Sigmoid colon (tissue), 7 donors: ENCODE measurements at regions of chr3 and their contacts with region 1.

Region 1: DNA sequence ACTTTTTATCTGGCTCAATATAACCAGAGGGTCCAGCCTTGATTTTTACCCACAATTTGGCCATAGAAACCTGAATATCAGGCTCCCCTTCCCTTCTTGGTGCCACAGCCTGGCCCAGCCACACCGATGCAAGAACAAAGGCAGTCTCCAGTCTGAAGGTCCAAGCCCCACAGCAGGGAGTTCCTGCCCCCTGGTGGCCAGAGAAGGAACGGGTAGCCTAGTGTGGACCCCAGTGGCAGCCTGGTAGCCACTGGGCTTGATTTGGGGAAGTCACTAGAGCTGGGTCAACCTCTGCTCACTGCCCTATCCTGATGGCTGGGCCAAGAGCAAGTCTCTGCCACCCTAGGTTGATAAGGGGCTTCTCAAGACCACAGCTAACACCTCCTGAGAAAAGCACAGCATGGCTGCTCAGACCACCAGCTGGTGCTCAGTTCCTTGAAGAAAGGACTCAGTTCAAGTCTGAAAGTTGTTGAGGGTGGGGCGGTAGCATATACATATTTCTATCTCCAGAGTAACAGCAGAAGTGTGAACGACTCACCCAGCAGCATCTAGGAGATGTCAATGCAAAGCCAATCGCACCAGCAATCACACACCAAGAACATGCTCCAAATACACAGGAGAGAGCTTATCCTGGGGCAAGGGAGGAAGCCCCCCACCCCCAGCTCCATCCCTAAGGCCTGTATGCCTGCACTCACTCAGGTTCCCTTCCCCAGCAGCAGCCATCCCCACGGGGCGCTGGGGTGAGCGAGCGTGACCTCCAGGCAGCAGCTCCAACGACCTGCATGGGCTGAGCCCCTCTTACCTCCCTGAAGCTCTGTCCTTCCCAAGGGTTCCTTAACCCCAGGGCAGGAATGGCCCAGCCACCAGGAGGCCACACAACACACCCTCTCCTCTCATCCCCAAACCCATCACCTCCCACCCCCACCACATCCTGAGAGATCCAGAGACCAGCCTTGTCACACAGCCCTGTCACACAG is 7.6 kb downstream of the PFKFB4 start:
- DNase-seq: peak; percentile 91
- H3K4me3 ChIP-seq: no peak overlapping the region
- H3K27ac ChIP-seq: no peak overlapping the region
- H3K4me1 ChIP-seq: peaks cover 0 to 5% (median 0%) of the 10 kb centered on the region in 4 donors
- H3K27me3 ChIP-seq: no peaks in the 10 kb centered on the region
- CTCF ChIP-seq: peak; percentile 88 to 96 (median 94)
- EP300 ChIP-seq: no peak
- POLR2A ChIP-seq: no peak

Region 2: GRCh38 chr3:48285132-48285531 is 263.9 kb before region 1 on chr3:
- intact Hi-C with region 1: no loop called
- DNase-seq: no peak
- H3K4me3 ChIP-seq: no peak overlapping the region
- H3K27ac ChIP-seq: no peak overlapping the region
- H3K4me1 ChIP-seq: no peaks in the 10 kb centered on the region
- H3K27me3 ChIP-seq: no peaks in the 10 kb centered on the region
- CTCF ChIP-seq: no peak
- EP300 ChIP-seq: no peak
- POLR2A ChIP-seq: no peak

Region 3: DNA sequence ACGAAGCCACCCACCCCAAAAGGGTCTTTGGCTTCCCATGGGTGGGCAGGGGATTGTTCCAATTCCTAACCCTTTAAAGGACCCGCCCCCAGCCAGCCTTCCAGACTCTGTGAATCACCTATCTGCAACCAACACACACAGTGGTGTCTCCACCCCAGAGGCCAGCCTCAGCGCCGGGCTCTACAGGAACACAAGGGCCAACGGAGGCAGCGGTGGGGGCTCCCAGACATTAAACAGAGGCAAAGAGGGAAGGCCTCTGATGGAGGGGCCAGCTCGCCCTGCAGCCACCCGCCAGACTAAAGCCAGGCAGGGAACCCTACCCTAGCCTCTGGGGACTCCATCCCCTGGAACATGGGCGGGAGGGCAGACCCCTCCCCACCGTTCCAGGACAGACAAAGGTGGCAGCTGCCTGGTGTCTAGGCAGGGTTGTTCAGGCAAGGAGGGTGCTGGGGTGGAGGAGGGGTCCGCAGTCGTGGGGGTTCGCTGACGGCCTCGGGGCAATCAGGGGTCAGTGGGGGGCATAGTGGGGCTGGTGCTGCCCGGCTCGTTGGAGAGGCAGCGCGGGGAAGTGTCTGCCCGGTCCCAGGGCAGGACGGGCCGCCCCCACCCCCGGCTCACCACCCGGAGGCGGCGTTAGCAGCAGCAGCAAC is 45.5 kb before region 1 on chr3:
- intact Hi-C with region 1: loop called (anchors 2 kb)
- DNase-seq: peak; percentile 88
- H3K4me3 ChIP-seq: peak overlapping the region; percentile 63 to 78 (median 73)
- H3K27ac ChIP-seq: peak overlapping the region; percentile 83 to 95 (median 91)
- H3K4me1 ChIP-seq: peaks cover 0 to 26% (median 24%) of the 10 kb centered on the region in 4 donors
- H3K27me3 ChIP-seq: no peaks in the 10 kb centered on the region
- CTCF ChIP-seq: no peak
- EP300 ChIP-seq: no peak
- POLR2A ChIP-seq: no peak